ENCODE measurements at regions of chr3 and their contacts with region 1.

Region 1: DNA sequence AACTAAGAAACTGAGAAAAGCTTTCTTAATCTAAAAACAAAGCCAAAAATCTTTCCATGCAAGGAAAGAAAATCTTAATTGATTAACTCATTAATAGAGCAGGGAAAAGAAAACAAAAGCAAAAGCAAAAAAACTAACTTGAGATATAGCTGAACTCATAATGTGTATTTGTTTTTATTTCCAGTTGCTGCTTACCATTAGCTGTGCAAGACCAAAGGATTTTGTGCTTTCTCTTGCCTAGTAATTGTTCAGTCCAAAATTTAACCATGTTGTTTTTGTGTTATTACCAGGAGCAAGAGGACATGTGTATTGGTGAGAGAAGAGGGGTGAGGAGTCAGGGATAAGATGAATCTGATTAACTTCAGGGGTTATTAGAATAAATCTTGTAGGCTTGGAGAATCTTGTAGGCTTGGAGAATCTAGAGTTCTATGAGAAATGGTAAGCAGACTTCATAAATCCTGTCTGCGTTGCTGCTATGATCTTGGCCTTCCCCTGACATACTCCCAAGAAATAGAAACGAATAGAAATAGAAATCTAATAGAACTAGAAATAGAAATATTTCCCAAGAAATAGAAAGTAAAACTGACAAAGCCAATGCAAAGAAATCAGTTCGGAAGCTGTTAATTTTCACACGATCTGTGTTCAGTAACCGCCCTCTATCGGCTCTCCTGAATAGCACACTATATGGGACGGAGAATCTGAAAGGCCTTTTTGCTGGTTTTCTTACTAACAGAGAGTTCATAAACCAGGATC is 72.6 kb upstream of the TNFSF10 start:
- DNase-seq: peak; percentile 53
- ATAC-seq: peak; percentile 26
- H3K4me3 Mint-ChIP-seq: peak overlapping the region; percentile 73
- H3K27ac Mint-ChIP-seq: peak overlapping the region; percentile 86
- H3K4me1 Mint-ChIP-seq: peaks cover 53% of the 10 kb centered on the region
- H3K27me3 Mint-ChIP-seq: peaks cover 5% of the 10 kb centered on the region
- CTCF ChIP-seq: peak; percentile 96

Region 2: DNA sequence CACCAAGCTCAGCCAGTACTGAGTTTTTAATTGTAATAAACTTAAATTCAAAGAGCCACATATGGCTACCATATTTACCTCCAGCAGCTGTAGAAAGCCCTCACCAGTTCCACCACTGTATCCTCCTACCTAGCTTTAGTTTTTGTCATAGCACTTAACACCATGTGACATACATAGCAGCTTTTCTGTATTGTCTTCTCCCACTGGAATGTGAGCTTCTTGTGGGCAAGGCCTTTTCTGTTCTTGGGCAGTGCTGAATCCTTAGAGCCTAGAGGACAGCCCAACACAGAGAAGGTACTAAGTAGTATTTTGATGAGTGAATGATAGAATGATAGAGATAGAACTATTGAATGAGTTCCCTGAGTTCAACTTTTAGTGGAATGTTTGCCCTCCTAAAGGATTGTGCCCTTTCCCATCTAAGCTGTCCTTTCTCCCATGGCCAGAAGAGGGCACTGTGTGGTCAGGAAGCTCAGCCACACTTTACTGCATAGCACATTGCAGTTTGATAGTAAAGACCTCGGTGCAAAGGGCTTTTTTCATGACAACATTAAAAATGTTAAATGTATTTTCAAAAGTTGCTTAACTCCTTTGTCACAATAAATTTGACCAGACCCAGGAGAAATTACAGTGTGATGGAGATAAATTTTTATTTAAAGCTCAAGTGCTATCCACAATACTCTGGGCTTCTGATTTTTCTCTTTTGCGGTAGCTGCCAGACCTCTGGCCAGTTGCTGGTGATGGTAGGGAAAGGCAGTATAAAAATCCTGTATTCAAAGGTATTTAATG is 263.4 kb before region 1 on chr3:
- CTCF ChIA-PET with region 1: interaction called, 10 read pairs
- POLR2A ChIA-PET with region 1: no interaction called
- intact Hi-C with region 1: no loop called
- DNase-seq: peak; percentile 63
- ATAC-seq: peak; percentile 79
- H3K4me3 Mint-ChIP-seq: no peak overlapping the region
- H3K27ac Mint-ChIP-seq: no peak overlapping the region
- H3K4me1 Mint-ChIP-seq: no peaks in the 10 kb centered on the region
- H3K27me3 Mint-ChIP-seq: no peaks in the 10 kb centered on the region
- CTCF ChIP-seq: peak; percentile 86

Region 3: DNA sequence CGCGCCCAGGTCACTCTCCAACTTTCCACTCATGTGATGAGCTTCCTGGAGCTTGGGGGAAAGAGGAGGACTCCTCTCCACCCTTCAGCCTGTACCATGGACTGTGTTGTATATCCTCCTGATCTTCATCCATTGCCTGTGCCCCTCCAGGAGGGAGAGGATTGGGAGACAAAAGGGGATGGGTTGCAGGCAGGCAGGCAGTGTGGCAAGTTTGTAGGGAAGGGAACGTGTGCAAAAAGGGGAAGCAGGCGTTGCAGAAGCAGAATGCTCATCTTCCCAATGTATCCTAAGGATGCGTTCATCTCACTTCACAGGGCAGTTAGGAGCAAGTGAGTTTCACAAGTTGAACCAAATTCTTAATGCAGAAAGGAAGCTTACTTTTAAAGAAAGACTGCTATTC is 119.5 kb before region 1 on chr3:
- CTCF ChIA-PET with region 1: interaction called, 27 read pairs
- POLR2A ChIA-PET with region 1: no interaction called
- intact Hi-C with region 1: no loop called
- DNase-seq: no peak
- ATAC-seq: no peak
- H3K4me3 Mint-ChIP-seq: peak overlapping the region; percentile 77
- H3K27ac Mint-ChIP-seq: no peak overlapping the region
- H3K4me1 Mint-ChIP-seq: peaks cover 9% of the 10 kb centered on the region
- H3K27me3 Mint-ChIP-seq: peaks cover 3% of the 10 kb centered on the region
- CTCF ChIP-seq: no peak

Region 4: DNA sequence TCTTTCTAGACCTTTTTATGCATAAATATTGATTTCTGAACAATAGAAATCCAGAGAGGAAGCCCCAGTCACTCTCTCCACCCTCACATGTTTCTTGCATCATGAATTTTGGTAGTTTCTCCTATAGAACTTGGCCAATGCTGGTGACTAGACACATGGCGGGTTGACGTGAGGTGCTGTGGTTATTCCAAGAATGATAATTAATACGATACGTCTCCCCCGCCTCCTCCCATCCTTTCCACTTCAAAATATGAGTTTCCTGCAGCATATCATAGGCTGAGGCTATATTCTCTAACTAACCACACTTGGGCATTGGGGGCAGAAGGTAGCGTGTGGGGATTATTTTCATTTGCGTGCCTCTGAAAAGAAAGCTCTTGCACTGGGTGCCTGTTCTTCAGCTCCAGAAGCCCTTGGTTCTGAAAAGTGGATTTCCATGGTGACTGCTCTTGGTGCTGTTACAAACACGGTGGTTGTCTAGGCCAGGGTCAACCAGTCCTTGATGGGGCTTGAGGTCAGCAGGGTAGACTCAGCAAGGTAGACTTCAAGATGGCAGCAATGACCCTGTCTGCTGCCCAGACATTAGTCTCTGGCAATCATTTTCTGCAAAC is 77.9 kb before region 1 on chr3:
- CTCF ChIA-PET with region 1: interaction called, 78 read pairs
- POLR2A ChIA-PET with region 1: interaction called, 26 read pairs
- intact Hi-C with region 1: loop called (anchors 1 kb)
- DNase-seq: peak; percentile 88
- ATAC-seq: peak; percentile 69
- H3K4me3 Mint-ChIP-seq: peak overlapping the region; percentile 56
- H3K27ac Mint-ChIP-seq: peak overlapping the region; percentile 93
- H3K4me1 Mint-ChIP-seq: peaks cover 86% of the 10 kb centered on the region
- H3K27me3 Mint-ChIP-seq: no peaks in the 10 kb centered on the region
- CTCF ChIP-seq: no peak

Region 5: GRCh38 chr3:172538368-172539151 is 57.3 kb before region 1 on chr3:
- CTCF ChIA-PET with region 1: interaction called, 10 read pairs
- POLR2A ChIA-PET with region 1: no interaction called
- intact Hi-C with region 1: no loop called
- DNase-seq: no peak
- ATAC-seq: no peak
- H3K4me3 Mint-ChIP-seq: no peak overlapping the region
- H3K27ac Mint-ChIP-seq: no peak overlapping the region
- H3K4me1 Mint-ChIP-seq: peaks cover 22% of the 10 kb centered on the region
- H3K27me3 Mint-ChIP-seq: no peaks in the 10 kb centered on the region
- CTCF ChIP-seq: no peak

Region 6: GRCh38 chr3:172569128-172570008 is 26.4 kb before region 1 on chr3:
- CTCF ChIA-PET with region 1: interaction called, 13 read pairs
- POLR2A ChIA-PET with region 1: no interaction called
- intact Hi-C with region 1: no loop called
- DNase-seq: no peak
- ATAC-seq: no peak
- H3K4me3 Mint-ChIP-seq: no peak overlapping the region
- H3K27ac Mint-ChIP-seq: no peak overlapping the region
- H3K4me1 Mint-ChIP-seq: peaks cover 4% of the 10 kb centered on the region
- H3K27me3 Mint-ChIP-seq: no peaks in the 10 kb centered on the region
- CTCF ChIP-seq: no peak

Region 7: DNA sequence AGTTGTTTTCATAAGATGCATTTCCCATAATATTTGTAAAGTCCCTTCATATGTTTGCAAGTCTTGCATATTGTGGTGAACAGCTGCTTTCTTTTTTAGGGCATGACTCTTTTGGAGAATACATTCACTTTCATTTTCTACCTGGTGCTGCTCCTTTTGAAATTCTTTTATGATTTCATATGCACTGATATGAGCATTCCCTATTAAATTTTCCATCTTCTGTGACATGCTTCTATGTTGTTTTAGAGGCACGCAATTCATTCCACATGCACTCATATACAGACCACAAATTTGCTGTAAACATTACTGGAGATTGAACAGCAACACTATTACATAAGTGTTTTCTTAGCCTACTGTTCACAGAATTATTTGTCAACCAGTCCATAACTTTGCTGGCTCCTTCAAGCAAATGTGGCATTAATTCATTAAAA is 20.2 kb after region 1 on chr3:
- CTCF ChIA-PET with region 1: interaction called, 57 read pairs
- POLR2A ChIA-PET with region 1: no interaction called
- intact Hi-C with region 1: no loop called
- DNase-seq: no peak
- ATAC-seq: no peak
- H3K4me3 Mint-ChIP-seq: no peak overlapping the region
- H3K27ac Mint-ChIP-seq: no peak overlapping the region
- H3K4me1 Mint-ChIP-seq: peaks cover 9% of the 10 kb centered on the region
- H3K27me3 Mint-ChIP-seq: no peaks in the 10 kb centered on the region
- CTCF ChIP-seq: no peak

Measured in activated CD8-positive, alpha-beta T cell treated with anti-CD3 and anti-CD28 coated beads for 36 hours (primary cell).